ENCODE measurements at regions of chr14 and their contacts with region 1.

Region 1: DNA sequence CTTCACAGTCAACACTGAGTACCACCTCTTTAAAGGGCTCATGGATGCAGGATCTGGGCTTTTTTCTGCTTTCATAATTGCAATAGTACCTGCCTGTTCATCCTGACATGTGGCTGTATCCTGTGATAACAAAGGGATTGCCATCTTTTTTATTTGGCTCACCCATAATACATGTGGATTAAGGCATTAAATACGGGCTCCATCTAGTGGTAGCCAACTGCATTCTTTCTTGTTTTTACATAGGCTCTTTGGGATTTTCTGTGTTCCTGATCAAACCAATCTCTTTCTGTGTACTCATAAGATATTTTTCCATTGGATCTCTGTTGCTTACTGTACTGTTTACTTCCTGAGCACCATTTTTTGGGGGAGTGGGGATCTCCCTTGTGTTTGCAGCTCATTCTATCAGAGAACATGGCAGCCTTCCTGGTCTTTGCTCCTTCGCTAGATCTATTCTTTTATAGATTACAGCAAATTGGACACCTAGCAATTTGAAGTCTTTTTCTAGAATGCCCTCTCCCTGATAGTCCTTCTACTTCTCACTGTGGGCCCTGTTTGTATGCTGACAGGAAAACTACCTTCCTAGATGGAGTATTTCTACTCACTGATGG is 723.4 kb upstream of the MDGA2 start:
- DNase-seq: no peak
- H3K4me3 ChIP-seq: no peak overlapping the region
- H3K27ac ChIP-seq: no peak overlapping the region
- H3K27me3 ChIP-seq: no peaks in the 10 kb centered on the region
- CTCF ChIP-seq: peak; percentile 32 to 79 (median 66)

Region 2: GRCh38 chr14:47917345-47917954 is 481.3 kb before region 1 on chr14:
- intact Hi-C with region 1: loop called (anchors 2 to 5 kb)
- DNase-seq: peak in 2 of 10 donors; percentile 10 to 34
- H3K4me3 ChIP-seq: no peak overlapping the region
- H3K27ac ChIP-seq: no peak overlapping the region
- H3K27me3 ChIP-seq: peaks cover 0 to 5% (median 0%) of the 10 kb centered on the region in 45 donors
- CTCF ChIP-seq: peak in 55 of 56 donors; percentile 15 to 82 (median 65)

Region 3: DNA sequence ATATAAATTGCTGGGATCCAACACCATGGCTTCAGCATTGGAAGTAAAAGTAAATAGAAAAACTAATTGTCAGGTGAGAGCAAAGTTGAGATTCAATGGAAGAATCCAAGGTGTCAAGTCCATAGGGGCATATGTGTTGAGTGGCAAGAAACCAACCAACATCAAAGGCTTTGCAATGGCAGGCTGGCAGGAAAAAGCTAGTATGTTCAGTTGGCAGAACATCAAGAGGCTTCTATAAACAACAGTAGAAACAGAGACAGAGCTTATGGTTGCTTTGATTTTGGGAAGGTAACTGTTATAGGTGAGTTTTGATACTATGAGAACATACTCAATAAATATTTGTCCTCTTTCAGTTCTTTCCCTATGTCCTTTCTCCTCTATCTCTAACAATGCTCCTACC is 169.7 kb before region 1 on chr14:
- intact Hi-C with region 1: no loop called
- DNase-seq: no peak
- H3K4me3 ChIP-seq: no peak overlapping the region
- H3K27ac ChIP-seq: no peak overlapping the region
- H3K27me3 ChIP-seq: no peaks in the 10 kb centered on the region
- CTCF ChIP-seq: no peak

Region 4: DNA sequence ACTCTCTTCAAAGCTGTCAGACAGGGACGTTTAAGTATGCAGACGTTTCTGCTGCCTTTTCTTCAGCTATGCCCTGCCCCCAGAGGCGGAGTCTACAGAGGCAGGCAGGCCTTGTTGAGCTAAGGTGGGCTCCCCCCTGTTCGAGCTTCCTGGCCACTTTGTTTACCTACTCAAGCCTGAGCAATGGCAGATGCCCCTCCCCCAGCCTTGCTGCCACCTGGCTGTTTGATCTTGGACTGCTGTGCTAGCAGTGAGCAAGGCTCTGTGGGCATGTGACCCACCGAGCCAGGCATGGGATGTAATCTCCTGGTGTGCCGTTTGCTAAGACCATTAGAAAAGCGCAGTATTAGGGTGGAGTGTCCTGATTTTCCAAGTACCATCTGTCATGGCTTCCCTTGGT is 177.0 kb after region 1 on chr14:
- intact Hi-C with region 1: no loop called
- DNase-seq: no peak
- H3K4me3 ChIP-seq: no peak overlapping the region
- H3K27ac ChIP-seq: no peak overlapping the region
- H3K27me3 ChIP-seq: no peaks in the 10 kb centered on the region
- CTCF ChIP-seq: no peak